ENCODE measurements at regions of chr1 and their contacts with region 1.

Region 1: GRCh38 chr1:224497714-224498573 is 63.3 kb upstream of the WDR26 start:
- DNase-seq: peak; percentile 68
- H3K4me3 Mint-ChIP-seq: peak overlapping the region; percentile 60
- H3K27ac Mint-ChIP-seq: peak overlapping the region; percentile 96
- H3K4me1 Mint-ChIP-seq: peaks cover 52% of the 10 kb centered on the region
- H3K27me3 Mint-ChIP-seq: no peaks in the 10 kb centered on the region

Region 2: DNA sequence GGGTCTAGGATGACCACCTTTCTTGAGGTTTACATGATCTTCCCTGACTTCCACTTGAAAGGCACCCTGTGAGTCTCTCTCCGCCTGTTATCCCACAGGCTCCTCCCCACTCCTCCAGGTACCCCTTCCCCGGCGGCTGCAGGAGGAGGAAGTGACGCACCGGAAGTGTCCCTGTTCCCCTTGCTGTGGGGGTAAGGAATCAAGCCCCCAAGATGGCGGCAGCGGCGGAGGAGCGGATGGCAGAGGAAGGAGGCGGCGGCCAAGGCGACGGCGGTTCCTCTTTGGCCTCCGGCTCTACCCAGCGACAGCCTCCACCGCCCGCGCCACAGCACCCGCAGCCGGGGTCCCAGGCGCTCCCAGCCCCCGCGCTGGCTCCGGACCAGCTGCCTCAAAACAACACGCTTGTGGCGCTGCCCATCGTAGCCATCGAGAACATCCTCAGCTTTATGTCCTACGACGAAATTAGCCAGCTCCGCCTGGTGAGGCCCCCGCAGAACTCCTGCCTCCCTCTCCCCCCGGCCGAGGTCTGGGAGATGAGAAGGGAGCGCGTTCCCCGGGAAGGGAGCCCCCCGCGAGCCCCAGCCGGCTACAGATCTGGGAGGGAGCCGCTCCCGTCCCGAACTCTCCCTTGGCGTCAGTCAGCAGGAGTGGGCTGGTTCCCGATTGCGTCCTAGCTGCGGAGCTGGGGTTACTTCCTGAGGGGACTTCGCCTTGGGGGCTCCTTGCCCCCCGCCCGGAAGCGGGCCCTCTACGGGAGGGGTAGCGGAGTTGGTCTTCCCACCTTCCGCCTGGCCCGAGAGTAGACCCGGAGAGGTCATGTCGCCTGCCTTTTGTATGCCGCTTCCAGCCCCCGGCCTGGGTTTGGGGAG is 383.8 kb before region 1 on chr1 and contains the start of gene FBXO28:
- intact Hi-C with region 1: loop called (anchors 1 kb)
- DNase-seq: peak; percentile 90
- H3K4me3 Mint-ChIP-seq: peak within 1 kb of the TSS; percentile 80
- H3K27ac Mint-ChIP-seq: peak within 1 kb of the TSS; percentile 79
- H3K4me1 Mint-ChIP-seq: peaks cover 25% of the 10 kb centered on the region
- H3K27me3 Mint-ChIP-seq: peaks cover 17% of the 10 kb centered on the region
- total RNA-seq, gene FBXO28: 22.9 and 24.3 TPM in 2 replicates

Region 3: DNA sequence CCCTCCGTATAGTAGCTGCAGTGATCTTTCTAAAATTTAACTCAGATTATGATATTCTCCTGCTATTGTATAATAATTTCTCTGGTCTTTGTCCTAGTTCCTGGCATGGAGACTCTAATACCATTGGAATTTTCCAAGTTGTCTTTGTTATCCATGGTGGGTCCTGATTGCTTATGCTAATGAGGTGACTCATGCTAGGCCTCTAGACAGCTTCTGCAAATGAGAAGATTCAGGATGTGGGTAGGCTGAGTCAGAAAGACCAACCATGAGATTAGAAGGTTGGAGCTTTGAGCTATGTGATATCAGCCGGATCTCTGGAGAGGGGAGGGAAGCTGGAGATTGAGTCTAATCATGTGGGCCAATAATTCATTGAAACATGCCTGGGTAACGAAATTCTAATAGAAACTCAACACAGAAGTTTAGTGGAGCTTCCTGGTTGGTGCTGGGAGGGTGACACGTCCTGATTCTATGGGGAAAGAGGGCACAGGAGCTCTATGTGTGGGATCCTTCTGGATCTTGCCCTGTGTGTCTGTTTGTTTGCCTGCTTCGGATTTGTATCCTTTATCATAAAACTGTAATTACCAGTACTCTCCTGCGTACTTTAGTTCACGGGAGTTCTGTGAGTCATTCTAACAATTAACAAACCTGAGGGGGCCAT is 45.0 kb after region 1 on chr1:
- intact Hi-C with region 1: loop called (anchors 1 kb)
- DNase-seq: peak; percentile 28
- H3K4me3 Mint-ChIP-seq: no peak overlapping the region
- H3K27ac Mint-ChIP-seq: no peak overlapping the region
- H3K4me1 Mint-ChIP-seq: peaks cover 29% of the 10 kb centered on the region
- H3K27me3 Mint-ChIP-seq: peaks cover 18% of the 10 kb centered on the region

Region 4: DNA sequence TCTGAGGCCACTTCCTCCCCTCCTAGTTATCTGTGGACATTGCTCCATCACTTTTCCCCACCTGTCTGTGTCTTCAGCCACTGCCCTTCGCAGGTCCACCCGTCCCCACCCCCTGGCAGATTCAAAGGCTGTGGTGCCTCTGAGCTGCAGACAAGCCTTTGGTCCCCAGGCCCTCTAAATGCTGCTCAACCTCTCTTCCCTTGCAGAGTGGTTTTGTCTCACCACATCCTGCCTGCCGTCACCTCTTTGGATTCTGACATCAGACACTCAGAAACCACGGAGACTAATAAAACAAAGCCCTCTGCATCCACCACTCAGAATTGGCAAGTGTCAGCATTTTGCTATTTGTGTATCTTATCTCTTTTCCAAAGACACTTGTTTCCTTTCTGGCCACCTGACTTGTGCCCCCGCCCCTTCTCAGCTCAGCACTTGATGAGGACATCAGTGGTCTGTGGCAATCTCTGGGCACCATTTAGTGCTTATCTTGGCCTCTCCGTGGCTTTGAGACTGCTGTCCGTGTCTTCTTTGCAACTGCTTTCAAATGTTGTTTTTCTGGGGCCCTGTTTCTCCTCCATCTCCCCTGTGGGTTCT is 125.9 kb after region 1 on chr1:
- intact Hi-C with region 1: loop called (anchors 5 kb)
- DNase-seq: peak; percentile 86
- H3K4me3 Mint-ChIP-seq: peak overlapping the region; percentile 65
- H3K27ac Mint-ChIP-seq: peak overlapping the region; percentile 91
- H3K4me1 Mint-ChIP-seq: peaks cover 39% of the 10 kb centered on the region
- H3K27me3 Mint-ChIP-seq: peaks cover 28% of the 10 kb centered on the region